Gastrocnemius medialis (tissue), 4 donors: ENCODE measurements at regions of chrX and their contacts with region 1.

Region 1: GRCh38 chrX:26672571-26672970 is 456.6 kb downstream of the MAGEB5 start:
- DNase-seq: no peak
- ATAC-seq: no peak
- H3K4me3 ChIP-seq: no peak overlapping the region
- H3K27ac ChIP-seq: no peak overlapping the region
- H3K4me1 ChIP-seq: no peaks in the 10 kb centered on the region
- H3K27me3 ChIP-seq: no peaks in the 10 kb centered on the region
- CTCF ChIP-seq: no peak
- POLR2A ChIP-seq: no peak

Region 2: GRCh38 chrX:26586570-26586969 is 86.0 kb before region 1 on chrX:
- in situ Hi-C with region 1: loop called in 1 of 4 experiments (anchors 25 kb)
- intact Hi-C with region 1: no loop called
- DNase-seq: no peak
- ATAC-seq: no peak
- H3K4me3 ChIP-seq: no peak overlapping the region
- H3K27ac ChIP-seq: no peak overlapping the region
- H3K4me1 ChIP-seq: no peaks in the 10 kb centered on the region
- H3K27me3 ChIP-seq: no peaks in the 10 kb centered on the region
- CTCF ChIP-seq: no peak
- POLR2A ChIP-seq: no peak

Region 3: GRCh38 chrX:27078371-27078770 is 405.8 kb after region 1 on chrX:
- in situ Hi-C with region 1: no loop called
- intact Hi-C with region 1: no loop called
- DNase-seq: no peak
- ATAC-seq: no peak
- H3K4me3 ChIP-seq: no peak overlapping the region
- H3K27ac ChIP-seq: no peak overlapping the region
- H3K4me1 ChIP-seq: no peaks in the 10 kb centered on the region
- H3K27me3 ChIP-seq: no peaks in the 10 kb centered on the region
- CTCF ChIP-seq: no peak
- POLR2A ChIP-seq: no peak